ENCODE measurements at regions of chr2 and their contacts with region 1.

Region 1: DNA sequence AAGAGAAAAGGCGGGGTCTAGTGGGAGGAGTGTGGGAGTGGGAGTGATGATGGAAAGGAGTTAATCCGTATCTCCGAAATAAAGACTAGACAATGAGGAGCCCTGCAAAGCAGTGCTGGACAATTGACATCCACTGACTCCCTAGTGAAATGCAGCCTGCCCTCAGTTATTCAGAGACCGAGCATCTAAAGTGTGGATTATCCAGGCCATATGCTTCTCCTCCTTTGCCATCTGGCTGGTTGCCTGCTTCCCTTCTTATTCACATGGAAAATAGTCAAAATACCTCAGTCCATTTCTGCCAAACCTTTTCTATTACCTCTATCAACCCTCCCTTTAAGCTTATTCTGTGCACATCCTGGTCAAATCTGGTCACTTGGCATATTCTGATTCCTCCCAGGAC is 288.8 kb upstream of the SIX3 start:
- DNase-seq: no peak
- H3K4me3 ChIP-seq: no peak overlapping the region
- H3K27ac ChIP-seq: no peak overlapping the region
- H3K4me1 ChIP-seq: no peaks in the 10 kb centered on the region
- H3K27me3 ChIP-seq: no peaks in the 10 kb centered on the region
- CTCF ChIP-seq: no peak
- POLR2A ChIP-seq: no peak

Region 2: GRCh38 chr2:44167940-44168680 is 484.6 kb before region 1 on chr2:
- CTCF ChIA-PET with region 1: no interaction called
- POLR2A ChIA-PET with region 1: no interaction called
- dilution Hi-C with region 1: no loop called
- intact Hi-C with region 1: no loop called
- DNase-seq: peak; percentile 100
- H3K4me3 ChIP-seq: peak overlapping the region; percentile 38 to 82 (median 71)
- H3K27ac ChIP-seq: peak overlapping the region; percentile 97
- H3K4me1 ChIP-seq: peaks cover 15% of the 10 kb centered on the region
- H3K27me3 ChIP-seq: peaks cover 0 to 5% of the 10 kb centered on the region in 2 experiments
- CTCF ChIP-seq: no peak
- POLR2A ChIP-seq: no peak

Region 3: GRCh38 chr2:44201648-44202165 is 451.0 kb before region 1 on chr2:
- CTCF ChIA-PET with region 1: no interaction called
- POLR2A ChIA-PET with region 1: no interaction called
- dilution Hi-C with region 1: no loop called
- intact Hi-C with region 1: no loop called
- DNase-seq: no peak
- H3K4me3 ChIP-seq: no peak overlapping the region
- H3K27ac ChIP-seq: no peak overlapping the region
- H3K4me1 ChIP-seq: no peaks in the 10 kb centered on the region
- H3K27me3 ChIP-seq: no peaks in the 10 kb centered on the region
- CTCF ChIP-seq: no peak
- POLR2A ChIP-seq: no peak

Region 4: GRCh38 chr2:44668336-44668735 is 15.6 kb after region 1 on chr2:
- CTCF ChIA-PET with region 1: interaction called, 11 read pairs
- POLR2A ChIA-PET with region 1: no interaction called
- dilution Hi-C with region 1: no loop called
- intact Hi-C with region 1: no loop called
- DNase-seq: peak; percentile 10
- H3K4me3 ChIP-seq: no peak overlapping the region
- H3K27ac ChIP-seq: no peak overlapping the region
- H3K4me1 ChIP-seq: no peaks in the 10 kb centered on the region
- H3K27me3 ChIP-seq: no peaks in the 10 kb centered on the region
- CTCF ChIP-seq: peak; percentile 2 to 7
- POLR2A ChIP-seq: no peak

Measured in endothelial cell of umbilical vein (primary cell).